GM10248 (cell line): ENCODE measurements at regions of chr1 and their contacts with region 1.

Region 1: GRCh38 chr1:31745096-31745945 is 18.8 kb downstream of the ADGRB2 start:
- DNase-seq: peak; percentile 87
- CTCF ChIP-seq: peak; percentile 74

Region 2: GRCh38 chr1:31762726-31763670 is 17.7 kb after region 1 on chr1:
- CTCF ChIA-PET with region 1: interaction called, 24 read pairs
- POLR2A ChIA-PET with region 1: no interaction called
- DNase-seq: peak; percentile 66
- CTCF ChIP-seq: peak; percentile 43

Region 3: GRCh38 chr1:32005522-32005921 is 260.2 kb after region 1 on chr1:
- CTCF ChIA-PET with region 1: no interaction called
- POLR2A ChIA-PET with region 1: no interaction called
- DNase-seq: no peak
- CTCF ChIP-seq: no peak

Region 4: DNA sequence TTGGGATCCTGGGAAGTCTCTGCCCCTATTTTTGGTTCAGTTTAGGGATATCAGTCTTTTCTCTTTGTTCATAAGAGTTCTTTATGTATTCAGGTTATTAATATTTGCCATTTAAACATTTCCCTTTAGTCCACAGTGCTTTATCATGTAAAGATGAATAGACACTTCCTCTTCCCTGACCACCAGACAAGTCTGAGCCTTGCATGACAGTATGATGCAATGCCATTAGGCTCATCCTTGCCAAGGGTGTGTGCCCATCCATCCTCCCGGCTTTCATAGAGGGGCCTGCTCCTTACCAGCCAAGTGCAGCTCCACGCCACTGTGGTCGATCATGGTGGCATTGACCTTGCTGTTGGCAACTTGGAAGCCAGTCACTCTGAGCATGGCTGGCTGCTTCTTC is 1779.3 kb after region 1 on chr1:
- CTCF ChIA-PET with region 1: no interaction called
- POLR2A ChIA-PET with region 1: no interaction called
- DNase-seq: no peak
- CTCF ChIP-seq: no peak